HepG2 (cell line): ENCODE measurements at regions of chr20 and their contacts with region 1.

Region 1: DNA sequence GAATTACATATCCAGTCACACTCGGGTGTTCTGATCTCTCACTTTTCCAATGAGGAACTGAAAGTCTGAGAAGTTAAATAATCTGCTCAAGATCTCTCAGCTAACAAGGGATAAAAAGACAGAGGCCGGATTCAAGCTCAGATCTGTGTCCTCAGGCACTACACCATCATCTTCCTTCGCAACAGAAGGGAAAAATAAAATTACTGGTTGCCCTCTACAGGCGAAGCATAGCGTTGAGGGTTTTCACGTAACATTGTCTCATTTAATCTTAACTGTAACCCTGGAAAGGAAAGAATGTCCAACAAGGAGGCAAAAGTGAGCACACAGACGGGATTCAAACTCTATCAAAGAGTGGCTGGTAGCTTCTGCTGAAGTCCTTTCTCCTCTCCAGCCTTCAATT is 67.8 kb upstream of the ANKEF1 start:
- DNase-seq: peak; percentile 13
- ATAC-seq: peak; percentile 85
- H3K4me3 ChIP-seq: no peak overlapping the region
- H3K27ac ChIP-seq: no peak overlapping the region
- H3K4me1 ChIP-seq: no peaks in the 10 kb centered on the region
- H3K27me3 ChIP-seq: no peaks in the 10 kb centered on the region
- CTCF ChIP-seq: peak; percentile 34
- EP300 ChIP-seq: no peak
- POLR2A ChIP-seq: no peak
- RAD21 ChIP-seq: no peak

Region 2: DNA sequence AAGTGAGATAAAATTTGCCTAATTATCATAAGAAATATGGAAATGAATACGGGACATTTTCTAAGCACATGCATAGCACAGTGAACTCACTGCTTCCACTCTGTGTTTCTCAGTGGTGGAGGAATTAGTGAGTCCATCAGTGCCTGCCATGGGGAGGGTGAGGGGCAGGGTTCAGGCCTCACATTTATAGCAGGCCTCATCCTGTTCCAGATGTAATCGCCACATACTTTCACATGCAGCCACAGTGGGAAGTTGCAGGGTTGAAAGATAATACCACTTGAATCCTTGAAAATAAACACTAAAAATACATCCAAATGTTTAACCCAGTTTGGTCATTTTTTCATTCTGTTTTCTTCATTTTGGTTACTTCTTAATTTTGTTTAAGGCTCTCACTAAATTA is 37.9 kb after region 1 on chr20:
- CTCF ChIA-PET with region 1: no interaction called
- POLR2A ChIA-PET with region 1: no interaction called
- in situ Hi-C with region 1: no loop called
- intact Hi-C with region 1: loop called (anchors 1 kb)
- DNase-seq: no peak
- ATAC-seq: no peak
- H3K4me3 ChIP-seq: no peak overlapping the region
- H3K27ac ChIP-seq: no peak overlapping the region
- H3K4me1 ChIP-seq: no peaks in the 10 kb centered on the region
- H3K27me3 ChIP-seq: no peaks in the 10 kb centered on the region
- CTCF ChIP-seq: no peak
- EP300 ChIP-seq: no peak
- POLR2A ChIP-seq: no peak
- RAD21 ChIP-seq: no peak